IMR-90 (cell line): ENCODE measurements at regions of chr11 and their contacts with region 1.

Region 1: GRCh38 chr11:59171508-59172322 is at the start of gene DTX4:
- DNase-seq: peak; percentile 86
- ATAC-seq: peak; percentile 87
- H3K4me3 ChIP-seq: peak within 1 kb of the TSS; percentile 54
- H3K27ac ChIP-seq: peak within 1 kb of the TSS; percentile 61
- H3K4me1 ChIP-seq: peaks cover 11% of the 10 kb centered on the region
- H3K27me3 ChIP-seq: peaks cover 3% of the 10 kb centered on the region
- CTCF ChIP-seq: peak; percentile 98
- POLR2A ChIP-seq: peak; percentile 48; the same call in 1 of the 2 replicates
- RAD21 ChIP-seq: peak; percentile 96
- total RNA-seq, gene DTX4: 2.5 and 2.7 TPM in 2 replicates

Region 2: GRCh38 chr11:58597486-58598144 is 574.1 kb before region 1 on chr11:
- CTCF ChIA-PET with region 1: no interaction called
- POLR2A ChIA-PET with region 1: no interaction called
- dilution Hi-C with region 1: no loop called
- in situ Hi-C with region 1: no loop called
- intact Hi-C with region 1: no loop called
- DNase-seq: no peak
- ATAC-seq: no peak
- H3K4me3 ChIP-seq: no peak overlapping the region
- H3K27ac ChIP-seq: no peak overlapping the region
- H3K4me1 ChIP-seq: peaks cover 10% of the 10 kb centered on the region
- H3K27me3 ChIP-seq: no peaks in the 10 kb centered on the region
- CTCF ChIP-seq: no peak
- POLR2A ChIP-seq: no peak
- RAD21 ChIP-seq: no peak

Region 3: GRCh38 chr11:59197991-59198390 is 26.3 kb after region 1 on chr11:
- CTCF ChIA-PET with region 1: interaction called, 10 read pairs
- POLR2A ChIA-PET with region 1: no interaction called
- dilution Hi-C with region 1: no loop called
- in situ Hi-C with region 1: no loop called
- intact Hi-C with region 1: no loop called
- DNase-seq: peak; percentile 68
- ATAC-seq: peak; percentile 87
- H3K4me3 ChIP-seq: no peak overlapping the region
- H3K27ac ChIP-seq: no peak overlapping the region
- H3K4me1 ChIP-seq: peaks cover 4% of the 10 kb centered on the region; the same call in 1 of the 2 replicates
- H3K27me3 ChIP-seq: no peaks in the 10 kb centered on the region
- CTCF ChIP-seq: no peak
- POLR2A ChIP-seq: no peak
- RAD21 ChIP-seq: no peak

Region 4: DNA sequence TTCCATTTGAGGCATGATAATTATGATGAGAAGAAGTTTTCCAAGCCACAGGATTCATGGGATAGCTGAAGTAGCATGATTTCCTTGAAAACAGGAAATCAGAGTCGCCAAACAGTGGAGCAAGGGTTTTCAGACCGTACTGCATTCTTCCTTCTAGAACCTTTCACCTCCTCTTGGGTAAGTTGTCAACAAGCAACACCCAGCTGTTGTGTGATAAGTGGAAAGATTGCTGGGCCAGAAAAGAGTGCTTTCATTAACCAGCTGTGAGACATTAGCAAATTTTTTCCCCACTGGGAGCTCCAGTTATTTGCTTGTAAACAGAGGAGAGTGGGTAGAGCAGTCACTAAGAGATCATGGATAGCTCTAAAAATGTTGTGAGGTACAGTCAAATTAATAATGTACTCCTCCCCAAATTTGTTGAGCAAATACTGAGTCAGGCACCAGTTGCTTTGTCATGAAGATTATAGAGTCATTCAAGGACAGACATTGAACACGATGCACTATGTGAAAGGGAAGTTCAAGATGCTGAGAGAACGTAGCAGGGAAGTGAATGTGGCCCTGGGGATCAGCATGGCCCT is 52.7 kb after region 1 on chr11:
- CTCF ChIA-PET with region 1: interaction called, 8 read pairs
- POLR2A ChIA-PET with region 1: no interaction called
- dilution Hi-C with region 1: no loop called
- in situ Hi-C with region 1: no loop called
- intact Hi-C with region 1: loop called (anchors 5 kb)
- DNase-seq: no peak
- ATAC-seq: peak; percentile 6
- H3K4me3 ChIP-seq: no peak overlapping the region
- H3K27ac ChIP-seq: peak overlapping the region; percentile 80; the same call in 1 of the 2 replicates
- H3K4me1 ChIP-seq: peaks cover 24% of the 10 kb centered on the region
- H3K27me3 ChIP-seq: no peaks in the 10 kb centered on the region
- CTCF ChIP-seq: no peak
- POLR2A ChIP-seq: no peak
- RAD21 ChIP-seq: no peak

Region 5: GRCh38 chr11:59429924-59430516 is 258.3 kb after region 1 on chr11:
- CTCF ChIA-PET with region 1: interaction called, 12 read pairs
- POLR2A ChIA-PET with region 1: no interaction called
- dilution Hi-C with region 1: no loop called
- in situ Hi-C with region 1: loop called (anchors 5 kb)
- intact Hi-C with region 1: loop called (anchors 1 kb)
- DNase-seq: peak; percentile 45
- ATAC-seq: peak; percentile 75
- H3K4me3 ChIP-seq: no peak overlapping the region
- H3K27ac ChIP-seq: no peak overlapping the region
- H3K4me1 ChIP-seq: no peaks in the 10 kb centered on the region
- H3K27me3 ChIP-seq: no peaks in the 10 kb centered on the region; the same call in 1 of the 2 replicates
- CTCF ChIP-seq: peak; percentile 74
- POLR2A ChIP-seq: no peak
- RAD21 ChIP-seq: peak; percentile 65